ENCODE measurements at regions of chr12 and their contacts with region 1.

Region 1: GRCh38 chr12:52949413-52950331 is 754 bp downstream of the KRT18 start:
- DNase-seq: peak; percentile 77 to 83
- H3K4me3 ChIP-seq: peak overlapping the region; percentile 72
- H3K4me3 Mint-ChIP-seq: peak overlapping the region; percentile 89
- H3K27ac Mint-ChIP-seq: peak overlapping the region; percentile 99
- H3K4me1 ChIP-seq: peaks cover 50% of the 10 kb centered on the region
- H3K4me1 Mint-ChIP-seq: peaks cover 29% of the 10 kb centered on the region
- H3K27me3 ChIP-seq: no peaks in the 10 kb centered on the region
- H3K27me3 Mint-ChIP-seq: no peaks in the 10 kb centered on the region
- CTCF ChIP-seq: no peak

Region 2: GRCh38 chr12:52969828-52970569 is 20.3 kb after region 1 on chr12:
- CTCF ChIA-PET with region 1: interaction called, 8 read pairs
- POLR2A ChIA-PET with region 1: interaction called, 42 read pairs
- intact Hi-C with region 1: loop called (anchors 1 kb)
- DNase-seq: peak; percentile 93 to 96
- H3K4me3 ChIP-seq: no peak overlapping the region
- H3K4me3 Mint-ChIP-seq: peak overlapping the region; percentile 69
- H3K27ac Mint-ChIP-seq: peak overlapping the region; percentile 98
- H3K4me1 ChIP-seq: peaks cover 70% of the 10 kb centered on the region
- H3K4me1 Mint-ChIP-seq: peaks cover 55% of the 10 kb centered on the region
- H3K27me3 ChIP-seq: no peaks in the 10 kb centered on the region
- H3K27me3 Mint-ChIP-seq: no peaks in the 10 kb centered on the region
- CTCF ChIP-seq: no peak

Region 3: GRCh38 chr12:52975141-52975583 is 25.5 kb after region 1 on chr12:
- CTCF ChIA-PET with region 1: interaction called, 10 read pairs
- POLR2A ChIA-PET with region 1: interaction called, 42 read pairs
- intact Hi-C with region 1: loop called (anchors 1 kb)
- DNase-seq: peak in 1 of 2 experiments; percentile 71
- H3K4me3 ChIP-seq: no peak overlapping the region
- H3K4me3 Mint-ChIP-seq: peak overlapping the region; percentile 20
- H3K27ac Mint-ChIP-seq: peak overlapping the region; percentile 83
- H3K4me1 ChIP-seq: peaks cover 80% of the 10 kb centered on the region
- H3K4me1 Mint-ChIP-seq: peaks cover 80% of the 10 kb centered on the region
- H3K27me3 ChIP-seq: no peaks in the 10 kb centered on the region
- H3K27me3 Mint-ChIP-seq: no peaks in the 10 kb centered on the region
- CTCF ChIP-seq: no peak

Region 4: GRCh38 chr12:53451661-53452158 is 502.0 kb after region 1 on chr12 and contains the start of gene PCBP2:
- CTCF ChIA-PET with region 1: no interaction called
- POLR2A ChIA-PET with region 1: no interaction called
- intact Hi-C with region 1: no loop called
- DNase-seq: peak; percentile 98 to 99
- H3K4me3 ChIP-seq: peak within 1 kb of the TSS; percentile 89
- H3K4me3 Mint-ChIP-seq: peak within 1 kb of the TSS; percentile 79
- H3K27ac Mint-ChIP-seq: peak within 1 kb of the TSS; percentile 94
- H3K4me1 ChIP-seq: peaks cover 18% of the 10 kb centered on the region
- H3K4me1 Mint-ChIP-seq: peaks cover 26% of the 10 kb centered on the region
- H3K27me3 ChIP-seq: no peaks in the 10 kb centered on the region
- H3K27me3 Mint-ChIP-seq: no peaks in the 10 kb centered on the region
- CTCF ChIP-seq: peak; percentile 77 to 87
- total RNA-seq, gene PCBP2: 1,036 and 1,143 TPM in 2 replicates

Measured in Caco-2 (cell line).